ENCODE measurements at regions of chr11 and their contacts with region 1.

Region 1: DNA sequence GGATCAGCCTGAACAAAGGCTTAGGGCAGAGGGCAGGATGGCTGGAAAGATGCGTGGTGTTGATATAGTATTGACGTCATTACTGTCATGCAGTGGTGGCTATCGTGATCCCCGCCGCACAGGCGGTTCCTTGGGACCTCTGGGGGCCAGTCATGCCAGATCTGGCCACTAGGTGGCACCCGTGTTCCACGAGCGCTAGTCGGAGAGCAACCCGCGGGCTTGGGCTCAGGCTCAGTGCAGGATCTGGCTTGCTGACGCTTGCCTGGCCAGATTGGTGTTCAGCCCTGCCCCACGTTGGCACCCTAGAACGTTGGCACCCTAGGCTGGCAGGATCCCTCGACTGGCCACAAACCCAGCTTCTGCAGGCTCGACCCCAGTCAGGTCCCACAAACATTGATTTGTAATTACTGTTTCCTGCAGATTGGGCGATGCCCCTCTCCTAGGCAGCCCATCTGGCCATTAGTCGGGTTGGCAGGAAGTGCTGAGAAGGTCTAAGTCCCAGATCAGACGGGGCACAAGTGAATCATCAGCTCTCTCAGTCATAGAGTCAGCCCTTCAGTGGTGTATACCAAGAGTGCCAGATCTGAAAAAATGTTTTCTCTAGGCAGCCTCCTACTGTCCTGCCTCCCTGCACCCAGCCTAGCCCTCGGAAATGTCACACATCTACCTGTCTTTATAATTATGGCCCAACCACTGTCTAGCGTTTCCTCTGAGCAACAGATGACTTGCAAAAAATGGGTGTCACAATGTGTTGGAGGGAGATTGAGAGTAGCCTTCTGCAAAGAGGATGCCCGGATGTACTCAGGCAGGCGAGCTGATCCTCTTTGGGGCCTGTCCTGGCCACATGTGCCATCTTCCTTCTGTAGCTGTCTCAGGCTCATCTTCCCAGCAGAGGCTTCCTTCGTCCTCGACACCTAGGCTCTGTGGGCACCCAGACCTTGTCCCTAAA is 315.3 kb downstream of the TMEM135 start:
- DNase-seq: peak; percentile 97

Region 2: DNA sequence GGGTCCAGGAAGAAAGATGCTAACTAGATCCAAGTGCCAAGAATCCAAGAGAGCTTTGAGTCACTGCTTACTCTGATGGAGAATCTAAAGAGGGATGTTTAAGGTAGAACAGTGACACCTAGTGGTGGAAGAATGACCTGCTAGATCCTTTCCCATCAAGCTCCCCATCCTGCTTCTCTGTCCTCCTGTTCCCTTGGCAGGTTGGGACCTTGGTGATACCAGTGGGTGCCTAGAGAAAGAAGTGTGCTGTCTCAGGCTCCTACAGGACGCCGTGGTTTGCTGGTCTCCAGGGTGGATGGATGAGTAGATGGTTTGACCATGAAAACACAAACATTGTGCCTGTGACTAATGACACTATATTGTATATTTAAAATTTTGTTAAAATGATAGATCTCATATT is 68.4 kb after region 1 on chr11:
- intact Hi-C with region 1: loop called (anchors 2 kb)
- DNase-seq: no peak

Region 3: GRCh38 chr11:87501388-87501787 is 148.4 kb after region 1 on chr11:
- intact Hi-C with region 1: no loop called
- DNase-seq: no peak

Region 4: DNA sequence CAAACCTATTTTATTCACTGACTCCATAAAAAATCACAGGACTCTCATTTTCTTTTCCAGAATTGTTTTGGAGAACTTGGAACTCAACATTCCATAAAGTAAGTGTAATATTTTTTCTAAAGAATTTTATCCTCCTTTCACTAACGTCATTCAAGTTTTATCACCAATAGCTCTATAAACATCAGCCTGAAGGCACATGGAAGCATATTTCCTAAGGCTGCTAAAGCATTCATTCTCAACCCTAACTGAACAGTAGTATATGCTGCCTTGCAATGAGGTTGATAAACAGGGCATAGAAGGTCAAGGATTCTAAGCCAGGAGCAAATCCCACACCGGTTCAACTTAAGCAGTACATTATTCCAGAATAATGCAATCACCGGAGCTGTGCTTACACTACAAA is 548.3 kb after region 1 on chr11:
- intact Hi-C with region 1: no loop called
- DNase-seq: no peak